ENCODE measurements at regions of chr1 and their contacts with region 1.

Region 1: GRCh38 chr1:61741711-61742619 is at the start of gene PATJ:
- DNase-seq: peak; percentile 89
- H3K4me3 Mint-ChIP-seq: peak within 1 kb of the TSS; percentile 93
- H3K27ac Mint-ChIP-seq: peak within 1 kb of the TSS; percentile 88
- H3K4me1 Mint-ChIP-seq: peaks cover 18% of the 10 kb centered on the region
- H3K27me3 Mint-ChIP-seq: no peaks in the 10 kb centered on the region
- total RNA-seq, gene PATJ: 5.0 and 5.1 TPM in 2 replicates

Region 2: DNA sequence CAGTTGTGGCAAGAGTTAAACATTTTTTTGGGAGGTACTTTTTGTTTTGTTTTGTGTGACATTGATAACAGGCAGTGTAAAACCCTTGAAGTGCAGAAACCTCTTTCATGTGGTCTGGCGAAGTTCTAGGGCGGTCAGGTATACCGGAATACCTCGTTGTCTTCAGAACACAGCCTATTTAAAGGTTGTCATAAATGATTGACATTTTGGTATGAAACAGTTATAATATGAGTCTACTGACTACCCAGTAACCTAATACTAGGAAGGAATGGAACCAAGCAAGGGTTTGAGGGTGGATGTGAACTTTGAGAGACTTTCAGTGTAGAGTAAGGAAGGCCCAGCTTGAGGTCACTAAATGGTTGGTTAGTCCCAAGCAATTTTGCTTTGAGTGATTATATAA is 40.8 kb after region 1 on chr1:
- intact Hi-C with region 1: loop called (anchors 2 kb)
- DNase-seq: peak; percentile 92
- H3K4me3 Mint-ChIP-seq: peak overlapping the region; percentile 64
- H3K27ac Mint-ChIP-seq: peak overlapping the region; percentile 68
- H3K4me1 Mint-ChIP-seq: peaks cover 35% of the 10 kb centered on the region
- H3K27me3 Mint-ChIP-seq: no peaks in the 10 kb centered on the region

Measured in activated CD4-positive, alpha-beta T cell treated with anti-CD3 and anti-CD28 coated beads, Interleukin-2, amount 10 ng/mL, durations not matched to agents 24 days and 14 days (primary cell).